HepG2 (cell line): ENCODE measurements at regions of chr12 and their contacts with region 1.

Region 1: GRCh38 chr12:52023182-52023975 is 16.6 kb downstream of the TAMALIN start:
- DNase-seq: peak; percentile 59
- ATAC-seq: peak; percentile 56
- H3K4me3 ChIP-seq: peak overlapping the region; percentile 57 to 85 (median 63)
- H3K27ac ChIP-seq: peak overlapping the region; percentile 16
- H3K4me1 ChIP-seq: peaks cover 59% of the 10 kb centered on the region
- H3K27me3 ChIP-seq: no peaks in the 10 kb centered on the region; a peak in 1 of 5 replicates
- CTCF ChIP-seq: peak; percentile 99
- EP300 ChIP-seq: no peak
- POLR2A ChIP-seq: no peak
- RAD21 ChIP-seq: peak; percentile 94

Region 2: DNA sequence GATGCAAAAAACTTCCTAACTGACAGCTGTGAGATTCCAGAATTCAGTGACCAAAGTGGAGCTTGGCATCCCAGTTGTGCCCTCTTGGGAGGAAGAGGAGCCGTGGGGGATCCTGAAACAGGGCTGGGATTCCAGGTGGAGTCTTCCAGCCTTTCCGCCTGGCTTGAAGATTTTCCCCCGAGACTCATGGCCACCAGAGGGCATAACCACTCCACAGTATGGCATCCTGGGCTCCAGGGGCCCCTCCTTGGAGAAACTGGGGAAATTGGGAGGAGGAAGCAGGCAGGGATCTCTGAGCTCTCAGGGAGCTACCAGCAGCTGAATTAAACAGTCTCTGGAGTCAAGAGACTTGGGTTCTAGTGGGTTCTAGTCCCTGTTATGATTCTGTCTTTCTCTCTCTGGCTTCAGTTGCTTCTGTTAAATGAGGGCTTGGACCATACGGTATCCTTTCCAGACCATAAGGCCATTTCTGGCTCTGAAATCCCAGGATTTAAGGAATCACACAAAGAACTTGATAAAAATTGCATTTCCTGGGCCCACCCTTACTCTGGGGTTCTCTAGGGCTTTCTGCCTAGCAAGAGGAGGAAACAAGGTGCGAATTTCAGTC is 19.2 kb before region 1 on chr12:
- CTCF ChIA-PET with region 1: interaction called, 99 read pairs
- POLR2A ChIA-PET with region 1: interaction called, 15 read pairs
- in situ Hi-C with region 1: no loop called
- intact Hi-C with region 1: loop called (anchors 1 kb)
- DNase-seq: peak; percentile 40
- ATAC-seq: peak; percentile 63
- H3K4me3 ChIP-seq: no peak overlapping the region
- H3K27ac ChIP-seq: no peak overlapping the region
- H3K4me1 ChIP-seq: peaks cover 14% of the 10 kb centered on the region
- H3K27me3 ChIP-seq: 0 out of 5 replicates have a peak, but pooled peaks cover 0 to 1% of the 10 kb centered on the region in 2 experiments
- CTCF ChIP-seq: peak; percentile 88
- EP300 ChIP-seq: no peak
- POLR2A ChIP-seq: no peak
- RAD21 ChIP-seq: peak; percentile 87

Region 3: DNA sequence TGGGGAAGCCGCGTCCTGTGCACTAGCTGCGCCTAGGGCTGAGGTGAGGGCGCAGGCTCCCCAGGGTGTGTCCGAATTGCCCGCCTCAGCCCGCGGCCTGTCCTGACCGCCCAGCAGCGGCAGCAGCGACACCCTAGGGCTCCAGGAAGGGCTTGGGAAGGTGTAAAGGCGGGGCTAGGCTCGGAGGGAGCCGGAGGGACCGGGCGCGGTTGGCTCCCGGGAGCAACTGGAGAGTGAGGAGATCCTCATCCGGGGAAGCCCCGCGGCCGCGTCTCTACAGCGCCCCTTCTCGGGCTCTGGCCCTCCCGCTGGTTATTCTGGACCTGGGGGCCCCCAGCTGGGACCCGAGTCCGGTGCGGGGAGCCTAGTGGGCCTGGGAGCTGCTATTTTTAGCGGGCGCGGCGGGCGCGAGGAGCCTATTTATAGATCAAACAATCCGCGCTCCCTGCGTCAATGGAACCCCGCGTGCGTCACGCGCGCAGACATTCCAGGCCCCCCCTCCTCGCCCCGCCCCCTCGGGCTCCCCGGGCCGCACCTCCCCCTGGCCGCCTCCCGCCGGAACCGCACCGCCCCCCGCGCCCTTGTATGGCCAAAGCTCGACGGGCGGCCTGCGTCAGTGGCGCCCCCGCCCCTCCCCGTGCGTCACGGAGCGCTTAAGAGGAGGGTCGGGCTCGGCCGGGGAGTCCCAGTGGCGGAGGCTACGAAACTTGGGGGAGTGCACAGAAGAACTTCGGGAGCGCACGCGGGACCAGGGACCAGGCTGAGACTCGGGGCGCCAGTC is 27.6 kb after region 1 on chr12 and contains the start of gene NR4A1:
- CTCF ChIA-PET with region 1: no interaction called
- POLR2A ChIA-PET with region 1: interaction called, 19 read pairs
- in situ Hi-C with region 1: no loop called
- intact Hi-C with region 1: no loop called
- DNase-seq: peak; percentile 85
- ATAC-seq: peak; percentile 83
- H3K4me3 ChIP-seq: peak within 1 kb of the TSS; percentile 82 to 98 (median 89)
- H3K27ac ChIP-seq: peak within 1 kb of the TSS; percentile 90
- H3K4me1 ChIP-seq: peaks cover 53% of the 10 kb centered on the region
- H3K27me3 ChIP-seq: no peaks in the 10 kb centered on the region
- CTCF ChIP-seq: peak; percentile 69
- EP300 ChIP-seq: no peak
- POLR2A ChIP-seq: peak; percentile 89 to 93
- RAD21 ChIP-seq: 0 out of 2 replicates have a peak, but pooled peaks have one; percentile 22
- total RNA-seq, gene NR4A1: 4.6 and 5.7 TPM in 2 replicates

Region 4: GRCh38 chr12:52082988-52083637 is 59.7 kb after region 1 on chr12:
- CTCF ChIA-PET with region 1: interaction called, 79 read pairs
- POLR2A ChIA-PET with region 1: interaction called, 15 read pairs
- in situ Hi-C with region 1: loop called (anchors 5 kb)
- intact Hi-C with region 1: loop called (anchors 1 kb)
- DNase-seq: peak; percentile 40
- ATAC-seq: peak; percentile 65
- H3K4me3 ChIP-seq: peak overlapping the region; percentile 3 to 71 (median 13); a peak in 2 of 6 replicates
- H3K27ac ChIP-seq: peak overlapping the region; percentile 46
- H3K4me1 ChIP-seq: peaks cover 49% of the 10 kb centered on the region
- H3K27me3 ChIP-seq: peaks cover 11 to 36% of the 10 kb centered on the region in 2 experiments
- CTCF ChIP-seq: peak; percentile 90
- EP300 ChIP-seq: no peak
- POLR2A ChIP-seq: no peak
- RAD21 ChIP-seq: peak; percentile 89